H1 (cell line): ENCODE measurements at regions of chr19 and their contacts with region 1.

Region 1: GRCh38 chr19:34096020-34096915 is 76.0 kb upstream of the LSM14A start:
- DNase-seq: no peak
- H3K4me3 ChIP-seq: peak overlapping the region in 2 of 4 experiments; percentile 21 to 48; a peak in 5 of 8 replicates
- H3K27ac ChIP-seq: no peak overlapping the region
- H3K4me1 ChIP-seq: no peaks in the 10 kb centered on the region; a peak in 1 of 7 replicates
- H3K27me3 ChIP-seq: no peaks in the 10 kb centered on the region
- CTCF ChIP-seq: peak in 2 of 3 experiments; percentile 53 to 57; a peak in 2 of 4 replicates
- EP300 ChIP-seq: no peak
- POLR2A ChIP-seq: no peak
- RAD21 ChIP-seq: peak; percentile 76 to 80

Region 2: GRCh38 chr19:33778089-33778791 is 318.0 kb before region 1 on chr19:
- CTCF ChIA-PET with region 1: interaction called, 68 read pairs
- POLR2A ChIA-PET with region 1: interaction called, 3 read pairs
- DNase-seq: peak in 1 of 2 experiments; percentile 99
- H3K4me3 ChIP-seq: peak overlapping the region in 2 of 4 experiments; percentile 20 to 46; a peak in 4 of 8 replicates
- H3K27ac ChIP-seq: no peak overlapping the region
- H3K4me1 ChIP-seq: peaks cover 0 to 7% (median 4%) of the 10 kb centered on the region in 4 experiments; a peak in 4 of 7 replicates
- H3K27me3 ChIP-seq: peaks cover 0 to 3% (median 0%) of the 10 kb centered on the region in 4 experiments; a peak in 3 of 7 replicates
- CTCF ChIP-seq: peak; percentile 100
- EP300 ChIP-seq: no peak
- POLR2A ChIP-seq: no peak
- RAD21 ChIP-seq: peak; percentile 98 to 99

Region 3: GRCh38 chr19:33828266-33829075 is 267.8 kb before region 1 on chr19:
- CTCF ChIA-PET with region 1: interaction called, 10 read pairs
- POLR2A ChIA-PET with region 1: no interaction called
- DNase-seq: no peak
- H3K4me3 ChIP-seq: no peak overlapping the region
- H3K27ac ChIP-seq: no peak overlapping the region
- H3K4me1 ChIP-seq: no peaks in the 10 kb centered on the region
- H3K27me3 ChIP-seq: no peaks in the 10 kb centered on the region
- CTCF ChIP-seq: no peak
- EP300 ChIP-seq: no peak
- POLR2A ChIP-seq: no peak
- RAD21 ChIP-seq: no peak

Region 4: DNA sequence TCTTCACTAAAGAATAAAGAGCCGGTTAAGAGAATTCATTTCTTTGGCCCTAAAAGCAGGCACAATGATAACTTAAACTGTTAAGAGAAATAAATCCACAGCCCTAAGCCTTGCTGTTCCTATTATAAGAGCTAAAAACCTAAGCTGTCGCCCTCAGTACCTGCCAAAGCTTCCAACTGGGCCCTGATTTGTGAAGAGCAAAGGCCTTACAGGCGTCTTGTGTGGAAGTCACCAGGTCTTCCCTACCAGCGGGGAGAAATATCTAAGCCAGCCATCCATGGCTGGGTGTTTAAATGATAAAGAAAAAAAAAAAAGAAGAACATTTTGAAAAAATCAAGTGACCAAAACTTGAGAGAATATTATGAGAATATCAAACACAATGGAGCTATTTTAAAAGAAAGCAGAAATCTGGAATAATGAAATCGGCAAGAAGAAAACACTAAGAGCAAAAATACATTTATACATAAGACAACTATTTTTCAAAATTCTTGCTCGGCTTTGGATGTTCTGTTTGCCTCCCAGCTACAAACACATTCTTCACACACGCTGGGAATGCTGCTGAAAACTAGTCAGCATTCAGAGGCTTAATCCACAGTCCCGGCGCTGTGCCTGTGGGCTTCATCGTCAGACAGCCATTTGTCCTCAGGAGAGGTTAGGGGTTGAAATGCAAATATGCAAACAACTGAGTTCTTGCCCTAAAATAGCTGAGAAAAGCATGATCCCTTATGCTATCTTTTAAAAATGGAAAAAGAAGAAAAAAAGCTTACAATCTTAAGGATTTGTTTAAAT is 13.8 kb before region 1 on chr19:
- CTCF ChIA-PET with region 1: interaction called, 14 read pairs
- POLR2A ChIA-PET with region 1: no interaction called
- DNase-seq: peak in 1 of 2 experiments; percentile 21
- H3K4me3 ChIP-seq: no peak overlapping the region
- H3K27ac ChIP-seq: no peak overlapping the region
- H3K4me1 ChIP-seq: peaks cover 4 to 13% (median 6%) of the 10 kb centered on the region in 4 experiments; a peak in 4 of 7 replicates
- H3K27me3 ChIP-seq: no peaks in the 10 kb centered on the region
- CTCF ChIP-seq: no peak
- EP300 ChIP-seq: no peak
- POLR2A ChIP-seq: no peak
- RAD21 ChIP-seq: no peak

Region 5: GRCh38 chr19:34128558-34129250 is 32.4 kb after region 1 on chr19:
- CTCF ChIA-PET with region 1: no interaction called
- POLR2A ChIA-PET with region 1: no interaction called
- DNase-seq: no peak
- H3K4me3 ChIP-seq: no peak overlapping the region
- H3K27ac ChIP-seq: no peak overlapping the region
- H3K4me1 ChIP-seq: no peaks in the 10 kb centered on the region; a peak in 1 of 7 replicates
- H3K27me3 ChIP-seq: no peaks in the 10 kb centered on the region
- CTCF ChIP-seq: no peak
- EP300 ChIP-seq: no peak
- POLR2A ChIP-seq: no peak
- RAD21 ChIP-seq: no peak

Region 6: GRCh38 chr19:34145741-34146202 is 49.5 kb after region 1 on chr19:
- CTCF ChIA-PET with region 1: interaction called, 24 read pairs
- POLR2A ChIA-PET with region 1: no interaction called
- DNase-seq: peak in 1 of 2 experiments; percentile 53
- H3K4me3 ChIP-seq: no peak overlapping the region
- H3K27ac ChIP-seq: no peak overlapping the region
- H3K4me1 ChIP-seq: no peaks in the 10 kb centered on the region
- H3K27me3 ChIP-seq: no peaks in the 10 kb centered on the region
- CTCF ChIP-seq: peak; percentile 57 to 87 (median 81)
- EP300 ChIP-seq: no peak
- POLR2A ChIP-seq: no peak
- RAD21 ChIP-seq: peak; percentile 91 to 92

Region 7: GRCh38 chr19:34310471-34310981 is 214.3 kb after region 1 on chr19:
- CTCF ChIA-PET with region 1: no interaction called
- POLR2A ChIA-PET with region 1: no interaction called
- DNase-seq: no peak
- H3K4me3 ChIP-seq: no peak overlapping the region
- H3K27ac ChIP-seq: no peak overlapping the region
- H3K4me1 ChIP-seq: peaks cover 3 to 10% (median 8%) of the 10 kb centered on the region in 4 experiments
- H3K27me3 ChIP-seq: no peaks in the 10 kb centered on the region
- CTCF ChIP-seq: no peak
- EP300 ChIP-seq: no peak
- POLR2A ChIP-seq: no peak
- RAD21 ChIP-seq: no peak